Activated B cell treated with CpG ODN at 0.5 μM for 24 hours (primary cell): ENCODE measurements at regions of chr2 and their contacts with region 1.

Region 1: GRCh38 chr2:64750817-64751285 is 97.1 kb upstream of the SERTAD2 start:
- DNase-seq: peak; percentile 92
- ATAC-seq: peak; percentile 82
- H3K4me3 Mint-ChIP-seq: peak overlapping the region; percentile 98
- H3K27ac Mint-ChIP-seq: peak overlapping the region; percentile 98
- H3K4me1 Mint-ChIP-seq: peaks cover 26% of the 10 kb centered on the region
- H3K27me3 Mint-ChIP-seq: no peaks in the 10 kb centered on the region
- CTCF ChIP-seq: no peak

Region 2: DNA sequence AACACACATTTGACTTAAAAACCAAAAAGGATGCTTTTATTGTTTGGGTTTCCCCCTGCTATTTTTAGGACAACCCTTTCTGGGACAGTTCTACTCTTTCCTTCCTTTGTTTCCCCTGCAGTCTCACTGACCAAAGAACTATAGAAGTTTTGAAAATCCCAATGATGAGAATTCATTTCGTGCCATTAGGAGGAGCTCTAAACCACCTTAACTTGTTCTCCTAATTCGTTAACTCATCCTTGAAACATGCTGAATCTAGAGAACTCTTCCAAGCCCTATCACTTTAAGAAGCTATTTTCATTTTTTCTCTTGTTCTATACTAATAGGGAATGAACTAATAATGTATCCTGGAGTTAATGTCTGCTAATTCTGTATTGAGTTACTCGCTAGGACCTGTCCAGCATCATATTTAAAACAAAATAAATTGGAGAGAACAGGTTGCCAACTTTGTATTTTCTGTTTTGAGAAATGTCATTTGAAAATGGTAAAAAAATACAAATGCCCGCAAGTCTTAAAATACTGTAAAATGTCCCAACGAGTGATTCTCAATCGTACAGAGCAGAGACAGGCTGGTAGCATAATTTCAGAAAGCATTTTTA is 163.9 kb before region 1 on chr2:
- CTCF ChIA-PET with region 1: interaction called, 5 read pairs
- POLR2A ChIA-PET with region 1: interaction called, 6 read pairs
- intact Hi-C with region 1: loop called (anchors 1 kb)
- DNase-seq: no peak
- ATAC-seq: peak; percentile 62
- H3K4me3 Mint-ChIP-seq: no peak overlapping the region
- H3K27ac Mint-ChIP-seq: peak overlapping the region; percentile 50
- H3K4me1 Mint-ChIP-seq: peaks cover 17% of the 10 kb centered on the region
- H3K27me3 Mint-ChIP-seq: no peaks in the 10 kb centered on the region
- CTCF ChIP-seq: peak; percentile 77

Region 3: DNA sequence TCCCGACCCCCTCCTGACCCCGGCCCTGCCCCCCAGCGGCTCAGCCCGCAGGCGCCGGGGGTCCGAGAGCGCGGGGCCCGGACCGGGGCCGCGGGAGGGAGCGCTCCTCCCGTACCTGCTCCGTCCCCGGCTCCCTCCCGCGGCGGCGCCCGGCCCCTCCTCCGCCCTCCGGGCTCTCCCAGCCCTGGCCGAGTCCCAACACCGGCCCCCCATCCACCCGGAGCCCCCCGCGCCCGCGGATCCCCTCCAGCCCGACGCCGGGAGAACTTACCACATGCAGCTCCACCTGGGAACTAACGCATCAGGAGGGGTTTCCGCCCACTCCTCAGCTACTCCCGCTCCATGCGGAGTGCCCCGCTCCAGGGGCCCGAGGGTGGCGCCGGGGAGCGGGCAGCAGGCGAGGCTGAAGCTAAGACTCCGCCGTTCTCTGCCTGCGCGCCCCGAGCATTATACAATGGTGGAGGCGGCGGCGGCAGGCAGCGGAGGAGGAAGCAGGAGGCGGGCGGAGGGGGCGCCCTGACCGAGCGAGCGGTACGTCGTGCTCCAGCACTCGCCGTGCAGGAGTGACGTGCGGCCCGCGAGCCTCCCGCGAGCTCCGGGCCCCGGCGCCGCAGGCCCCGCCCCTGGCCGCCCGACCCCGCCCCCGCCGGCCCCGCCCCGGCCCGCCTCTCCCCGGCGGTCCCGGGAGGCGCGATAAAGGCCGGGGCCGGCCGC is 97.3 kb before region 1 on chr2 and contains the start of gene SERTAD2:
- CTCF ChIA-PET with region 1: interaction called, 69 read pairs
- POLR2A ChIA-PET with region 1: interaction called, 439 read pairs
- intact Hi-C with region 1: loop called (anchors 1 kb)
- DNase-seq: peak; percentile 84
- ATAC-seq: peak; percentile 79
- H3K4me3 Mint-ChIP-seq: peak within 1 kb of the TSS; percentile 91
- H3K27ac Mint-ChIP-seq: peak within 1 kb of the TSS; percentile 93
- H3K4me1 Mint-ChIP-seq: peaks cover 82% of the 10 kb centered on the region
- H3K27me3 Mint-ChIP-seq: no peaks in the 10 kb centered on the region
- CTCF ChIP-seq: no peak
- total RNA-seq, gene SERTAD2: 45.6 and 47.3 TPM in 2 replicates

Region 4: DNA sequence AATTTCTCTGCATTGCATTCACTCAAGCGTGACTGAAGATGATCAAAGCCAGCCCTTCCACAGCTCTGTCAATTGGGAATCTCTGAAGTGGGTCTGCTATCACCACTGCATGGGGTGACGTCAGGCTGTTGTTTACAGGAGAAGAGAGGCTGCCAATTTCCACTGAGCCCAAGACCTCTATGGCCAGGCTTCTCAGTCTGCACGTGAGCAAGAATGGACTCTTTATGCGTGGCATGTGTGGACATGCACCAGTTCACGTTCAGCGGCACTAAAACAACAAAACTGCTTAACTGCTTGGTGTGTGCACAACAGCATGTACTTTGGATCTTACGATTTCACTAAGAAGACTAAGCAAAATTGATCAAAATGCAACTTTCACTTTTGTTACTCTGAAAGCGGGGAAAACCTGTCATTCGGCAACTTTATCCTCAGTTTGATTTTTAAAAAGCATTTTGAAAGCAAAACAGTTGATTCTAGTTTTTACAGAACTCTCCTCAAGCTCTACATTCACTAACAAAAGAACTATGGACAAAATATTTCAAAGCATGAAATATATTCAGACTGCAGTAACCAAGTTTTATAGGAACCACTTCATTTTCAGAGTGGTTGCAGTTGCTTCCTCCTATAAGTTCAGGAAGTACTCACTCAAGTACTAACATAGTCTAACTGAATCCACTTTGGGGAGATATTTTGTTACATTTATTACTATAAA is 20.1 kb before region 1 on chr2:
- CTCF ChIA-PET with region 1: interaction called, 9 read pairs
- POLR2A ChIA-PET with region 1: interaction called, 176 read pairs
- intact Hi-C with region 1: loop called (anchors 1 kb)
- DNase-seq: peak; percentile 24
- ATAC-seq: peak; percentile 45
- H3K4me3 Mint-ChIP-seq: peak overlapping the region; percentile 84
- H3K27ac Mint-ChIP-seq: peak overlapping the region; percentile 91
- H3K4me1 Mint-ChIP-seq: peaks cover 66% of the 10 kb centered on the region
- H3K27me3 Mint-ChIP-seq: no peaks in the 10 kb centered on the region
- CTCF ChIP-seq: no peak

Region 5: DNA sequence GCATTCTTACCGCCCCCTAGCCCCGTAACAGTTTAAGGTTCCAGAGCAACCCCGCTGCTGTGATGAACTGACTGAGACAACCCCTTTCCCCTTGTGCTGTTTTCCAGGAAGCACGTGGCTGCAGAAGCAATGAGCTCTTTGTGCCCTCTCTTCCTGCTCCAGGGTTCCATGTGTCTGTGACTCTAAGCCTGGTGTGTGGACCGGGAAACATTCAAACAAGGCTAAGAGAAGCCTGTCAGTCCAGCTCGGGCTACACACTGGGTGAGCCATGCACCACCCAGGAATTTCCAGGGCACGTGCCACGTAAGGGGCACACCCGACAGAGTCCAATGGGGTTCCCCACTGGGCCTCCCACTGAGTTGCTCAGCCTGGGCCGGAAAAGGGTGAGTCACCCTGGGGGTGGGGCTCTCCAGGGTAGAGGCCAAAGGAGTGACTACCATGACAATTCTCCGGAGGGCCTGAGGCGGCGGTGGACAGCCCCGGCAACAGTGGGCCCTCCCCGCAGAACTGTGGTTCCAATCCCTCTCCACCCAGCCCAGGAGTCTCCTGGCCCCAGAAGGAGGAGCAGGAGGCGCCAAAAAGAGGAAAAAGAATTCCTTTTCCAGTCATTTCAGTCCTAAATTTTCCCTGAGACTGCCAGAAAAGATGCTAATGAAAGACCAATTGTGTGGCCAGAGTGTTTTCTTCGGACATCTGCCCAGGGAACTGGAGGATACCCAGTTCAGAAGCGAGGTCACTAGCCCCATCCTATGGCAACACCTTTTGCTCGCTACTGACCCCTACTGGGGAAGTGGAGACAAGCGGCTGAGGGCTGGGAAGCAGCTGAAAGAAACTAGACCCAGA is 80.5 kb after region 1 on chr2:
- CTCF ChIA-PET with region 1: interaction called, 17 read pairs
- POLR2A ChIA-PET with region 1: interaction called, 19 read pairs
- intact Hi-C with region 1: loop called (anchors 1 kb)
- DNase-seq: peak; percentile 75
- ATAC-seq: peak; percentile 96
- H3K4me3 Mint-ChIP-seq: peak overlapping the region; percentile 63
- H3K27ac Mint-ChIP-seq: peak overlapping the region; percentile 82
- H3K4me1 Mint-ChIP-seq: peaks cover 21% of the 10 kb centered on the region
- H3K27me3 Mint-ChIP-seq: no peaks in the 10 kb centered on the region
- CTCF ChIP-seq: no peak

Region 6: GRCh38 chr2:65024149-65024829 is 273.4 kb after region 1 on chr2:
- CTCF ChIA-PET with region 1: no interaction called
- POLR2A ChIA-PET with region 1: interaction called, 7 read pairs
- intact Hi-C with region 1: loop called (anchors 1 kb)
- DNase-seq: no peak
- ATAC-seq: no peak
- H3K4me3 Mint-ChIP-seq: peak overlapping the region; percentile 29
- H3K27ac Mint-ChIP-seq: peak overlapping the region; percentile 63
- H3K4me1 Mint-ChIP-seq: peaks cover 58% of the 10 kb centered on the region
- H3K27me3 Mint-ChIP-seq: no peaks in the 10 kb centered on the region
- CTCF ChIP-seq: no peak